Psoas muscle (tissue), 8 donors: ENCODE measurements at regions of chr2 and their contacts with region 1.

Region 1: DNA sequence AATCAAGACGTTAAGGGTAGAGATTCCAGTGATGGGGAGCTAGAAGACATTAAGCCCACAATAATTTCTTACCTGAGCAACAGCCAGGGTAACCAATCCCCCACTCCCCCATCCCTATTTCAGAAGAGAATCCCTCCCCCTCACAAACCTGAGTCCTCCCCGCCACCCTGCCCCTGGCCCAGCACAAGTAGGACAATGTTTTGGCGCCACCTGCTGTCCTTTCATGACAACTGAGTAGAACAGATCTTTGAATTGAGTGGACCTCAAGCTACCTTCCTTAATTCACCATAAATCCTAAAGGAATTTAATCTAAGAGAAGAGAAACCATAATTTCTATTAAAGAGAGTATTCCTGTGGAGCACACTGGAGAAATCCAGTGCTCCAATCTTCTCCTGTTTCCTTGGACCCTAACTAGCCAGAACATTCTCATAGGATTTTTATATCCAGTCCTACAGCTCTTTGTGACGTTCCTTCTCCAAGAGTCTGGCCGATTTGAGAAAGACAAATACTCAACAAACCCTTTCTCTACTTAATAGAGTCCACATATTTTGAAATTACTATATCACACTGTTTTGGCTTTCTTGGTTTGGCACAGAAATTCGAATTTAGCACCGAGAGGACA is 41.1 kb downstream of the NHEJ1 start:
- DNase-seq: peak; percentile 50 to 77
- ATAC-seq: peak; percentile 58 to 85 (median 74)
- H3K4me3 ChIP-seq: no peak overlapping the region
- H3K27ac ChIP-seq: no peak overlapping the region
- H3K4me1 ChIP-seq: no peaks in the 10 kb centered on the region
- H3K27me3 ChIP-seq: no peaks in the 10 kb centered on the region
- CTCF ChIP-seq: peak; percentile 67

Region 2: GRCh38 chr2:219010162-219010756 is 109.3 kb before region 1 on chr2:
- intact Hi-C with region 1: no loop called
- DNase-seq: no peak
- ATAC-seq: no peak
- H3K4me3 ChIP-seq: no peak overlapping the region
- H3K27ac ChIP-seq: no peak overlapping the region
- H3K4me1 ChIP-seq: no peaks in the 10 kb centered on the region
- H3K27me3 ChIP-seq: peaks cover 0 to 38% (median 4%) of the 10 kb centered on the region in 3 donors
- CTCF ChIP-seq: no peak

Region 3: GRCh38 chr2:219073413-219074129 is 46.0 kb before region 1 on chr2:
- intact Hi-C with region 1: loop called (anchors 5 kb)
- DNase-seq: no peak
- ATAC-seq: peak in 1 of 4 donors; percentile 37
- H3K4me3 ChIP-seq: no peak overlapping the region
- H3K27ac ChIP-seq: no peak overlapping the region
- H3K4me1 ChIP-seq: no peaks in the 10 kb centered on the region
- H3K27me3 ChIP-seq: peaks cover 0 to 3% (median 0%) of the 10 kb centered on the region in 3 donors
- CTCF ChIP-seq: peak; percentile 42

Region 4: DNA sequence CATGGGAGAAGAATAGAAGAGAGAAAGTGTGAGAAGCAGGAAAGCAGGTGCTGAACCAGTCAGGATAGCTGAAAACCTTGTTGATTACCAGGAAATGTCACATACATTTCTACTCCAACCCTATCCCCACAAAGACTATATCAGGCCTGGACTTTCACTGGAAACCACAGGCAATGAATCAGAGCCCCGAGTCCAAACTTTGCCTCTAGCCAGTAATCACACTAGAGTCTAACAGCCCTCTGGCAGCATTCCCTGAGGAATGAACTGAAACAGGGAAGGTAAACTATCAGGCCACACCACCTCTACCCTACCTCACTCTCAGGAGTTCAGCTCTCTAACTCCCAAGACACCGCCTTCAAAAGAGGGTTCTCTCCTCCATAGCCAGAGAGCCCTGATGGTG is 40.1 kb before region 1 on chr2:
- intact Hi-C with region 1: loop called (anchors 5 kb)
- DNase-seq: no peak
- ATAC-seq: no peak
- H3K4me3 ChIP-seq: no peak overlapping the region
- H3K27ac ChIP-seq: no peak overlapping the region
- H3K4me1 ChIP-seq: no peaks in the 10 kb centered on the region
- H3K27me3 ChIP-seq: no peaks in the 10 kb centered on the region
- CTCF ChIP-seq: no peak